MCF 10A (cell line): ENCODE measurements at regions of chr17 and their contacts with region 1.

Region 1: GRCh38 chr17:78313735-78314648 is 45.9 kb downstream of the SOCS3 start:
- DNase-seq: peak; percentile 92
- H3K4me3 Mint-ChIP-seq: peak overlapping the region; percentile 50
- H3K27ac Mint-ChIP-seq: peak overlapping the region; percentile 31
- H3K4me1 Mint-ChIP-seq: peaks cover 42% of the 10 kb centered on the region
- H3K27me3 Mint-ChIP-seq: peaks cover 19% of the 10 kb centered on the region
- CTCF ChIP-seq: no peak

Region 2: DNA sequence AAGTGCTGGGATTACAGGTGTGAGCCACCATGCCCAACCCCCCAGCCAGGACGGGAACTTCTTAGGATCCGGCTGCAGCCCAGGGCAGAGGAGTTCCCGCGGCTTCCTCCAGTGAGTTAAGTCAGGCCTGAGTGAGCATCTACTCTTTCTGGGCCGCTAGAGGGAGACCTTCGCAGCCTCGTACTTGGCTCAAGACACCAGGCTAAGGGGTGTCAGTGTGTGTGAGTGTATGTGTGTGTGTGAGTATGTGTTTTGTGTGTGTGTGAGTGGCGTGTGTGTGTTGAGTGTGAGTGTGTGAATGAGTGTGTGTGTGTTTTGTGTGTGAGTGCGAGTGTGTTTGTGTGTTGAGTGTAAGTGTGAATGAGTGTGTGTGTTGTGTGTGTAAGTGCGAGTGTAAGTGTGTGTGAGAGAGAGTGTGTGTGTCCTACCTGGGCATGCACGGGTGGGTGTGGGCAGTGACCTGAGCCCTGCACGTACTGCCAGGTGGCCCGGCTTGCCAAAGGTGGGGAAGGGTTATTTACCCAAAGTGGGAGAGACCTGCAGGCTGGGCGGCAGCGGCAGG is 24.1 kb before region 1 on chr17:
- CTCF ChIA-PET with region 1: interaction called, 6 read pairs
- POLR2A ChIA-PET with region 1: no interaction called
- intact Hi-C with region 1: loop called (anchors 1 kb)
- DNase-seq: peak; percentile 85
- H3K4me3 Mint-ChIP-seq: no peak overlapping the region
- H3K27ac Mint-ChIP-seq: no peak overlapping the region
- H3K4me1 Mint-ChIP-seq: peaks cover 8% of the 10 kb centered on the region
- H3K27me3 Mint-ChIP-seq: no peaks in the 10 kb centered on the region
- CTCF ChIP-seq: peak; percentile 85

Region 3: DNA sequence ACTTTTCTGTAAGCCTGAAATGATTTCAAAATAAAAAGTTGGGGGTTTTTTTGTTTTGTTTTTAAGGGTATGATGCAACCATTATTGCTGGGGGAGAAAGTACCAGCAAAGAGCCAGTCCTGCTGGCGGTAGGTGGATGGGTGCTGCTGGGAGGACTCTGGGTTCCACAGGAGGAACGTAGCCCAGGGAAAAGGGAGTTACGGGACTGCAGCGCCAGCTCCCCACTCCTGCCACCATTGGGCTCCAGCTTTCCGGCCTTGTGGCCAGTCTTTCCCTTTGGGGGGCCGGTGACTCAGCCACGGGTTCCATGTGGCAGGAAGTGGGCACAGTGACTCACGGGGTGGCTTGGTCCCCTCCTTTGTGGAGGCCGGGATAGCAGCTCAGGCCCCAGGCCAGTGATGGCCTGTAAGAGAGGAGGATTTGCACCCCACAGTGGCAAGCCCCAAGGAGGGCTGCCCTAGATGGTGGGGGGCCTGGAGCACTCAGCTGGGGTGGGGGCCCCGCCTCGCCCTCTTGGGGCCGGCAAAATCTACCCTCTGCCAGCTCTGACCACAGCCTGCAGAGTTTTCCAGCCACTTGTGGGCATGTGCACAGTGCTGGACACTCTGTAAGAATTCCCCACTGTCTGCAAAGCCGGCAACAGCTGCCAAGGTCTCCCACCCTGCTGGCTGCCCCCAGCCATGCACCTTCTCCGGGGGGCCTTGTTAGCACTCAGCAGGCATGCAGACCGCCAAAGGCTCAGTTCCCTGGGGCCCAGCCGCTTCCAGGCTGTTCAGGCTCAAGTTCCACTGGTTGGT is 15.5 kb after region 1 on chr17:
- CTCF ChIA-PET with region 1: interaction called, 3 read pairs
- POLR2A ChIA-PET with region 1: interaction called, 16 read pairs
- intact Hi-C with region 1: no loop called
- DNase-seq: peak; percentile 89
- H3K4me3 Mint-ChIP-seq: peak overlapping the region; percentile 47
- H3K27ac Mint-ChIP-seq: peak overlapping the region; percentile 82
- H3K4me1 Mint-ChIP-seq: peaks cover 33% of the 10 kb centered on the region
- H3K27me3 Mint-ChIP-seq: no peaks in the 10 kb centered on the region
- CTCF ChIP-seq: no peak

Region 4: DNA sequence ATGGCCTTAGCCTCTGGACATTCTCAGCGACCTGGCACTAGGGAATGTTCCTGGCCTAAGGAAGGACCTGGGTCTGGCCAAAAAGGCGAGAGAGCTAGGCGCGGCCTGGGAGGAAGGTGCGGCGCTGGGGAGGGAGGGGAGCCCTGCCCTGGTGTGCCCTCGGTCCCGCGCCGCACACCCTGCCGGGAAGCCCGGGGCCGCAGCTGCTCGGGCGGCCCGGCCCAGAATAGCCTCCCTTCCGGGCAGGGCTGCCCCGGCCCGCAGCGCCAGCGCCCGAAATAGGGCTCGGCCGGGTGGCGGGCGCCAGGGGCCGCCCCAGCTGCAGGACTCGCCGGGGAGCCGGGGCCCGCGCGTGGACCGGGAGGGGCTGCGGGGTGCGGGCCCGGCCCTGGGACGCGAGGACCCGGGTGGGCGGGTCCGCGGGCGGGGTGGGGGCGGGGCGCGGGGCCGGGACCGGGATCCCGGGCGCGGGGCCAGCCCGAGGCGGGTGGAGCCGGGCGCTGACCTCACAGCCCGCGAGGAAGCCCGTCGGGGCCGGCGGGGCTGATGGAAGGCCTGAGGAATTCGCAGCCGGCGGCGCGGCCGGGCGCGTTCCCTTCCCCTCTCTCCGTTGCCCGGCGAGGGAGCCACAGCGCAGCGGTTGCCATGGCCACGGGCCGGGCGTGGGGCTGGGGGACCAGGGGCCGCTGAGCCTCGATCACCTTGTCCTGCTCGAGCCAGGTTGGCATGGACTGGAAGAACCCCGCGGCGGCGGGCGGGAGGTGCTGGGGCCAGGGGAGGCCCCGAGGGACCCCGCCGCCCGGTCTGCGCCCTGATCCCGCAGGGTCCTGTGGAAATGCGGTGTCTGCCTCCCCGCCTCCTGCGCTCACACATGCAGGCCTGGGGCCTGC is 27.8 kb after region 1 on chr17:
- CTCF ChIA-PET with region 1: no interaction called
- POLR2A ChIA-PET with region 1: interaction called, 60 read pairs
- intact Hi-C with region 1: loop called (anchors 2 kb)
- DNase-seq: peak; percentile 70
- H3K4me3 Mint-ChIP-seq: peak overlapping the region; percentile 59
- H3K27ac Mint-ChIP-seq: no peak overlapping the region
- H3K4me1 Mint-ChIP-seq: peaks cover 32% of the 10 kb centered on the region
- H3K27me3 Mint-ChIP-seq: no peaks in the 10 kb centered on the region
- CTCF ChIP-seq: no peak